ENCODE measurements at regions of chr2 and their contacts with region 1.

Region 1: GRCh38 chr2:68185541-68186164 is 28.0 kb downstream of the PNO1 start:
- DNase-seq: peak; percentile 11 to 80 (median 57)
- ATAC-seq: peak; percentile 60
- H3K4me3 ChIP-seq: no peak overlapping the region
- H3K4me3 Mint-ChIP-seq: no peak overlapping the region
- H3K27ac ChIP-seq: no peak overlapping the region
- H3K27ac Mint-ChIP-seq: no peak overlapping the region
- H3K4me1 ChIP-seq: peaks cover 7% of the 10 kb centered on the region
- H3K4me1 Mint-ChIP-seq: peaks cover 34% of the 10 kb centered on the region
- H3K27me3 ChIP-seq: no peaks in the 10 kb centered on the region
- H3K27me3 Mint-ChIP-seq: no peaks in the 10 kb centered on the region
- CTCF ChIP-seq: peak; percentile 81

Region 2: GRCh38 chr2:68151037-68151436 is 34.6 kb before region 1 on chr2:
- CTCF ChIA-PET with region 1: interaction called, 3 read pairs
- POLR2A ChIA-PET with region 1: no interaction called
- intact Hi-C with region 1: loop called (anchors 2 to 5 kb)
- DNase-seq: no peak
- ATAC-seq: no peak
- H3K4me3 ChIP-seq: no peak overlapping the region
- H3K4me3 Mint-ChIP-seq: no peak overlapping the region
- H3K27ac ChIP-seq: no peak overlapping the region
- H3K27ac Mint-ChIP-seq: peak overlapping the region; percentile 25
- H3K4me1 ChIP-seq: peaks cover 21% of the 10 kb centered on the region
- H3K4me1 Mint-ChIP-seq: peaks cover 31% of the 10 kb centered on the region
- H3K27me3 ChIP-seq: no peaks in the 10 kb centered on the region
- H3K27me3 Mint-ChIP-seq: no peaks in the 10 kb centered on the region
- CTCF ChIP-seq: no peak

Region 3: GRCh38 chr2:68196120-68196716 is 10.6 kb after region 1 on chr2:
- CTCF ChIA-PET with region 1: interaction called, 12 read pairs
- POLR2A ChIA-PET with region 1: interaction called, 5 read pairs
- intact Hi-C with region 1: loop called in 1 of 2 experiments (anchors 1 kb)
- DNase-seq: peak in 6 of 9 experiments; percentile 14 to 76 (median 38)
- ATAC-seq: peak; percentile 20
- H3K4me3 ChIP-seq: no peak overlapping the region
- H3K4me3 Mint-ChIP-seq: no peak overlapping the region
- H3K27ac ChIP-seq: no peak overlapping the region
- H3K27ac Mint-ChIP-seq: peak overlapping the region; percentile 62
- H3K4me1 ChIP-seq: peaks cover 8% of the 10 kb centered on the region
- H3K4me1 Mint-ChIP-seq: peaks cover 61% of the 10 kb centered on the region
- H3K27me3 ChIP-seq: no peaks in the 10 kb centered on the region
- H3K27me3 Mint-ChIP-seq: no peaks in the 10 kb centered on the region
- CTCF ChIP-seq: peak; percentile 54

Region 4: DNA sequence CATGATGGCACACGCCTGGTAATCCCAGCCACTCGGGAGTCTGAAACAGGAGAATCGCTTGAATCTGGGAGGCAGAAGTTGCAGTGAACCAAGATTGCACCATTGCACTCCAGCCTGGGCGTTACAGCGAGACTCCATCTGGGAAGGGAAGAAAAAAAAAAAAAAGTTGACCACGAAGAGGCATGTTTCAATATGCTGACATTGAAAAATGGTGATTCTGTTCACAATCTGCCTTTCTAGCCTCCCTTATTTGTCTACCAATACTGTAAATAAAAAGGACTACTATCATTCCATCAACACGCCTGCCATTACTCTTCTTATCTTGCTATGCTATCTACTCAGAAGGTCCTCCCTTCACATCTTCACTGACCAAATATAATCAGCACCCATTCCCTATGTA is 1182.9 kb after region 1 on chr2:
- CTCF ChIA-PET with region 1: no interaction called
- POLR2A ChIA-PET with region 1: no interaction called
- intact Hi-C with region 1: no loop called
- DNase-seq: no peak
- ATAC-seq: no peak
- H3K4me3 ChIP-seq: no peak overlapping the region
- H3K4me3 Mint-ChIP-seq: no peak overlapping the region
- H3K27ac ChIP-seq: no peak overlapping the region
- H3K27ac Mint-ChIP-seq: no peak overlapping the region
- H3K4me1 ChIP-seq: no peaks in the 10 kb centered on the region
- H3K4me1 Mint-ChIP-seq: peaks cover 2% of the 10 kb centered on the region
- H3K27me3 ChIP-seq: no peaks in the 10 kb centered on the region
- H3K27me3 Mint-ChIP-seq: no peaks in the 10 kb centered on the region
- CTCF ChIP-seq: no peak